Calu3 (cell line): ENCODE measurements at regions of chr1 and their contacts with region 1.

Region 1: DNA sequence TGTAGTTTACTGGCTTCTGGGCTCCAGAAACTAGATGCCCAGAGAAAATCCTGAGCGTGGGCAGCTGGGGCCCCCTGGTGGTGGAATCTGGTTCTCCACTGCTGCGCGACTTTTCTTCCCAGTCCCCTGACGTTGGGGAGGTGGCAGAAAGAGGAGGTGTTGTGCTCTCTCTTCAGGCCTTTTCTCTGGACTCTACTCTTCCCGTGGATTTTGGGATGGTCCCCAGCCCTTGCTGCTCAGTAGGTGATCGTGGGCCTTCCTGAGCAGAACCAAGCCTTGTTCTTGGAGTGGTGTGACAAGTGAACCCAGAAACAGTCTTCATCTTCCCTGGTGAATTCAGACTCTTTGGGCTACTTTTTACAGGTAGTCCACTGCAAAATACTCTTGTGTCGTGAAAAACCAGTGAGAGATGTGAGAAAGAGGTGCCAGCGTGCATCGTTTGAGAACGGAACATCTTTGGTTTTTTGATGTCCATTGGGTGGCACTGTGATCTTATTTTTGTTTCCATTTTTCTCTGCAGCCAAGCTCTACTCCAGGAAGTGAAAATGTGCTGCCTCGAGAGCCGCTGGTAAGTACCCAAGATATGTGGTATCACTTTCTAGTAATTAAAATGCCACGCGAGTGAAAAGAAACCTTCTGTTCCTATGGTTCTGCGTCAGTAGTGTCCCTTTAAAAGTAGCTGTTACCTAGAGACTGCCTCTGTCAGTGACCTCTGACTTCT is 20.2 kb downstream of the PEX14 start:
- DNase-seq: peak; percentile 81
- H3K4me3 Mint-ChIP-seq: peak overlapping the region; percentile 28
- H3K27ac Mint-ChIP-seq: no peak overlapping the region
- H3K4me1 Mint-ChIP-seq: peaks cover 19% of the 10 kb centered on the region
- H3K27me3 Mint-ChIP-seq: no peaks in the 10 kb centered on the region
- CTCF ChIP-seq: peak; percentile 76

Region 2: GRCh38 chr1:10308001-10308400 is 186.9 kb before region 1 on chr1:
- CTCF ChIA-PET with region 1: no interaction called
- intact Hi-C with region 1: no loop called
- DNase-seq: no peak
- H3K4me3 Mint-ChIP-seq: no peak overlapping the region
- H3K27ac Mint-ChIP-seq: no peak overlapping the region
- H3K4me1 Mint-ChIP-seq: no peaks in the 10 kb centered on the region
- H3K27me3 Mint-ChIP-seq: no peaks in the 10 kb centered on the region
- CTCF ChIP-seq: no peak

Region 3: DNA sequence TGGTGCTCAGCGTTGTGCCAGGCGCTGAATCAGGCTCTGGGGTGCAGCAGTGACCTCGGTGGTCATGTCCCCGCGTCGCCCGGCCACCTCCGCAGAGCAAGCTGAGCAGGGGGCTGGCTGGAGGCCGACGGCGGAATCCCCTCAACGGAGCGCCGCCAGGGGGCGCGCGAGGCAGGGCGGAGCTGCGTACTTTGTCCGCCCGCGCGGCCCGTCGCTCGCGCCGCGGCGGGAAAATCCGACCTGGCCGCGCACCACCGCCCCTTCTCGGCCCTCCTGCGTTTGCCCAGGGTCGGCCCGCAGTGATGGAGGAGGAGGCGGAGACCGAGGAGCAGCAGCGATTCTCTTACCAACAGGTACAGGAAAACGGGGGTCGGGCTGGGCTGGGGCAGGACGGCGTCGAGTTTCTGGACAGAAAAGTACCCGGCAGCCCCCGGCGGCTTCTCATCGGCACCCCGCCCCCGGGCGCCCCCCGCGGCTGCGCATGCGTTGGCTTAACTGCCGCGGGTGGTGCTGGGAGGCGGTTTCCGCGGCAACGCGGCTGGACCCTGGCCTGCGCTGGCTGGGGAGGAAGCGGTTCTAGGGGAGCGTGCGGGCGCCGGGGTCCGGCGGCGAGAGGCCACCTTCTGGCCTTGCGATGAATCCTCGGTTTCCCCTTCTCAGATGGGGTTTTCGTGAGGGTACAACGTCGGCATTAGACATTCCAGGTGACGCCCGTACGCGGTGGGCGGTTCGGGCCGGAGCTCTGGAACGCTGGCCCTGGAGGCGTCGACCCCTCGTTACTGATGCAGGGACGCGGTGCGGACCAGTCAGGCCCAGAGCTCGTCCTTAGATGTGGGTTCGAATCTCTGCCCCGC is 64.5 kb before region 1 on chr1 and contains the start of gene CENPS:
- CTCF ChIA-PET with region 1: interaction called, 7 read pairs
- intact Hi-C with region 1: loop called (anchors 2 kb)
- DNase-seq: peak; percentile 91
- H3K4me3 Mint-ChIP-seq: peak within 1 kb of the TSS; percentile 94
- H3K27ac Mint-ChIP-seq: peak within 1 kb of the TSS; percentile 75
- H3K4me1 Mint-ChIP-seq: no peaks in the 10 kb centered on the region
- H3K27me3 Mint-ChIP-seq: no peaks in the 10 kb centered on the region
- CTCF ChIP-seq: peak; percentile 86
- total RNA-seq, gene CENPS: 18.0 and 21.3 TPM in 2 replicates

Region 4: GRCh38 chr1:10796019-10796944 is 301.4 kb after region 1 on chr1 and contains the start of gene CASZ1:
- CTCF ChIA-PET with region 1: no interaction called
- intact Hi-C with region 1: no loop called
- DNase-seq: peak; percentile 85
- H3K4me3 Mint-ChIP-seq: peak within 1 kb of the TSS; percentile 81
- H3K27ac Mint-ChIP-seq: no peak within 1 kb of the TSS
- H3K4me1 Mint-ChIP-seq: peaks cover 7% of the 10 kb centered on the region
- H3K27me3 Mint-ChIP-seq: peaks cover 29% of the 10 kb centered on the region
- CTCF ChIP-seq: no peak
- total RNA-seq, gene CASZ1: 12.6 and 16.5 TPM in 2 replicates